ENCODE measurements at regions of chr5 and their contacts with region 1.

Region 1: GRCh38 chr5:159100025-159100781 is 487 bp upstream of the EBF1 start:
- DNase-seq: peak; percentile 93
- H3K4me3 ChIP-seq: peak overlapping the region; percentile 94
- H3K27ac ChIP-seq: peak overlapping the region; percentile 90
- H3K4me1 ChIP-seq: peaks cover 50% of the 10 kb centered on the region
- CTCF ChIP-seq: no peak

Region 2: GRCh38 chr5:158676642-158677469 is 423.3 kb before region 1 on chr5:
- CTCF ChIA-PET with region 1: no interaction called
- POLR2A ChIA-PET with region 1: no interaction called
- intact Hi-C with region 1: loop called (anchors 5 kb)
- DNase-seq: peak; percentile 85
- H3K4me3 ChIP-seq: peak overlapping the region; percentile 48
- H3K27ac ChIP-seq: peak overlapping the region; percentile 73
- H3K4me1 ChIP-seq: peaks cover 30% of the 10 kb centered on the region
- CTCF ChIP-seq: peak; percentile 93

Region 3: GRCh38 chr5:158770506-158770905 is 329.7 kb before region 1 on chr5:
- CTCF ChIA-PET with region 1: no interaction called
- POLR2A ChIA-PET with region 1: interaction called, 3 read pairs
- intact Hi-C with region 1: loop called (anchors 1 kb)
- DNase-seq: peak; percentile 65
- H3K4me3 ChIP-seq: no peak overlapping the region
- H3K27ac ChIP-seq: peak overlapping the region; percentile 23
- H3K4me1 ChIP-seq: peaks cover 83% of the 10 kb centered on the region
- CTCF ChIP-seq: peak; percentile 82

Region 4: GRCh38 chr5:158819840-158820620 is 280.2 kb before region 1 on chr5:
- CTCF ChIA-PET with region 1: no interaction called
- POLR2A ChIA-PET with region 1: interaction called, 14 read pairs
- intact Hi-C with region 1: loop called (anchors 1 kb)
- DNase-seq: peak; percentile 52
- H3K4me3 ChIP-seq: peak overlapping the region; percentile 47
- H3K27ac ChIP-seq: peak overlapping the region; percentile 94
- H3K4me1 ChIP-seq: peaks cover 98% of the 10 kb centered on the region
- CTCF ChIP-seq: no peak

Region 5: GRCh38 chr5:159010661-159011442 is 89.4 kb before region 1 on chr5:
- CTCF ChIA-PET with region 1: no interaction called
- POLR2A ChIA-PET with region 1: interaction called, 5 read pairs
- intact Hi-C with region 1: loop called (anchors 1 kb)
- DNase-seq: peak; percentile 95
- H3K4me3 ChIP-seq: peak overlapping the region; percentile 73
- H3K27ac ChIP-seq: peak overlapping the region; percentile 100
- H3K4me1 ChIP-seq: peaks cover 80% of the 10 kb centered on the region
- CTCF ChIP-seq: no peak; the same call in 1 of the 2 replicates

Region 6: DNA sequence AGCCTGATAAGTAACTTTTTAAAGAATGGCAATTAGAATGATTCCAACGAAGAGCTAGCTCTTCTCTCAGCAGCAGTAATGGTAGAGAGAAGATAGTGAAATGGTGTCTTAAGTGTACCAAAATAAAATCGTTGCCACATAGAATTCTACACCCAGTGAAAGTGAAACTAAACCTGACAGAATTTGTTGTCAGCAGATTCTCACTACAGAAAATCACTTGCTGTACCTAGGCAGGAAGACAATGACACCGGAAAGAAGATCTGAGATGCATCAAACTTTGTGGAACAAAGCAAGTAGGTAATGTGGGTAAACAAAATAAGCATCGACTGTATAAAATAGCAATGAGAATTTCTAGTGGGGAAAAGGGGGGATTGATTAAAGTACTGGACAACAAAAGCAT is 20.2 kb after region 1 on chr5:
- CTCF ChIA-PET with region 1: no interaction called
- POLR2A ChIA-PET with region 1: no interaction called
- intact Hi-C with region 1: no loop called
- DNase-seq: no peak
- H3K4me3 ChIP-seq: no peak overlapping the region
- H3K27ac ChIP-seq: no peak overlapping the region
- H3K4me1 ChIP-seq: no peaks in the 10 kb centered on the region
- CTCF ChIP-seq: no peak

Measured in OCI-LY7 (cell line).